Sigmoid colon (tissue), 7 donors: ENCODE measurements at regions of chr12 and their contacts with region 1.

Region 1: DNA sequence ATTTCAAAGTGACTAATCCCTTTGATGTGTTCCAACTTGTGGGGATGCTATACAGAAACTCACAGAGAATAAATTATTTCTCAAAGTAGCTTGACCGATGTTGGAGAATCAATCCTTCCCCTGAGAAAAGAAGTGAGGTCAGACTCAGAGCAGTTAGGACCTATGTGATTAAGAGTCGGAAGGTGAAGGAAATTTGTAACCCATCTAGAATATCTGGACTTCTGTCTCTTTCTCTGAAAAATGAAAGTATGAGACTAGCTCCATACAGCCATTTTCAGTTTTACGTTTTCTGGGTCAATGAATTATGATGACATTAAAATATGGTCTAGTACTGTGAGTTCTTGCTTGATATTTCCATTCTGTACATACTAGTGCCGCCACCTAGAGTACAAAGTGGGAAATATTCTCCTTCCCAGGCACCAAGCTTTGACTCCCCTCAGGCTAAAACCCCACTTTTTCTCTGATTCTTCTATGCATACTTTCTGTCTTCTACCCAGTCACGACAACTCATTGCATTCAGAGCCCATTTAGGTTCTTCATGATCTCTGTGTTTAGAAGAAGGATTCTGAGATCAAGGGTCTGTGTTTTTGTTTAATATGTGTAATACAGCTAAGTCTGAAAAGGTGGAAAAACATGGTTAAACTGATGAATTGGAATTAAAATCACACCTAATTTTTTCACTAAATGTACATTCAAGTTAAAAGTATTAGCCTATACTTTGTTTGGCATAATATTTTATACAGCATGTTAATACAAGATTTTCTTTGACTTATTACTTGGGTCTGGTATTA is 6.9 kb upstream of the NTS start:
- DNase-seq: no peak
- H3K4me3 ChIP-seq: peak overlapping the region in 2 of 4 donors; percentile 8 to 18
- H3K27ac ChIP-seq: no peak overlapping the region
- H3K4me1 ChIP-seq: no peaks in the 10 kb centered on the region
- H3K27me3 ChIP-seq: no peaks in the 10 kb centered on the region
- CTCF ChIP-seq: peak; percentile 7 to 80 (median 73)
- EP300 ChIP-seq: no peak
- POLR2A ChIP-seq: no peak

Region 2: DNA sequence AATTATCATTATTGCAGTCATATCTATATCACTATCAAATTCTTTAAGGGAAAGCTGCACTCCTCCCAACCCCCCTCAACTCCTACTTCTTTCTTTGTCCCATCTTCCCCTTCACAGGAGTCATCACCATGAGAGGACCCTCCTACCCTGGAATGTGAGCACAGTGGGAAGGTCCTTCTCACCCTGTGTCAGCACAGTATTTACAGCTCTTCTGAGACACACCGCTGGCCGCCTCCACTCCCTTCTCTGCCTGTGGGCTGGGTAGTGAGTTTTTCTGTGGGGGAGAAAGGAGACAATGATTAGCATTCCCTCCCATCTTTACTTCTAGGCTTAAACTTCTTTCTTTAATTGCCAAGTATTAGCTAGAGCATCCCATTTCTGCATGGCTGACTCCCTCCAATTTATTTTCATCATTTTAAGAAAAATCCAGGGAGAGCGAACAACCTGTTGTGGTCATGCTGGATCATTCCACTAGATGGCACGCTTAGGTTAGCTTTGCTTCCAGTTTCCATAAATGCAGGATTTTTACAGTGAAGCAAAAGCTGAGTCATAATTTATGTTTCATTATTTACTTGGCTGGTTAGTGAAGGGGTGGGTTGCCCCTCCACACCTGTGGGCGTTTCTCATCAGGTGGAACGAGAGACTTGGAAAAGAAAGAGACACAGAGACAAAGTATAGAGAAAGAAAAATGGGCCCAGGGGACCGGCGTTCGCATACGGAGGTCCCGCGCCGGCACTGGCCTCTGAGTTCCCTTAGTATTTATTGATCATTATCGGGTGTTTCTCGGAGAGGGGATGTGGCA is 398.6 kb before region 1 on chr12:
- intact Hi-C with region 1: loop called (anchors 2 kb)
- DNase-seq: no peak
- H3K4me3 ChIP-seq: peak overlapping the region; percentile 28 to 50 (median 42)
- H3K27ac ChIP-seq: no peak overlapping the region
- H3K4me1 ChIP-seq: no peaks in the 10 kb centered on the region
- H3K27me3 ChIP-seq: no peaks in the 10 kb centered on the region
- CTCF ChIP-seq: peak; percentile 42 to 69 (median 52)
- EP300 ChIP-seq: no peak
- POLR2A ChIP-seq: no peak

Region 3: DNA sequence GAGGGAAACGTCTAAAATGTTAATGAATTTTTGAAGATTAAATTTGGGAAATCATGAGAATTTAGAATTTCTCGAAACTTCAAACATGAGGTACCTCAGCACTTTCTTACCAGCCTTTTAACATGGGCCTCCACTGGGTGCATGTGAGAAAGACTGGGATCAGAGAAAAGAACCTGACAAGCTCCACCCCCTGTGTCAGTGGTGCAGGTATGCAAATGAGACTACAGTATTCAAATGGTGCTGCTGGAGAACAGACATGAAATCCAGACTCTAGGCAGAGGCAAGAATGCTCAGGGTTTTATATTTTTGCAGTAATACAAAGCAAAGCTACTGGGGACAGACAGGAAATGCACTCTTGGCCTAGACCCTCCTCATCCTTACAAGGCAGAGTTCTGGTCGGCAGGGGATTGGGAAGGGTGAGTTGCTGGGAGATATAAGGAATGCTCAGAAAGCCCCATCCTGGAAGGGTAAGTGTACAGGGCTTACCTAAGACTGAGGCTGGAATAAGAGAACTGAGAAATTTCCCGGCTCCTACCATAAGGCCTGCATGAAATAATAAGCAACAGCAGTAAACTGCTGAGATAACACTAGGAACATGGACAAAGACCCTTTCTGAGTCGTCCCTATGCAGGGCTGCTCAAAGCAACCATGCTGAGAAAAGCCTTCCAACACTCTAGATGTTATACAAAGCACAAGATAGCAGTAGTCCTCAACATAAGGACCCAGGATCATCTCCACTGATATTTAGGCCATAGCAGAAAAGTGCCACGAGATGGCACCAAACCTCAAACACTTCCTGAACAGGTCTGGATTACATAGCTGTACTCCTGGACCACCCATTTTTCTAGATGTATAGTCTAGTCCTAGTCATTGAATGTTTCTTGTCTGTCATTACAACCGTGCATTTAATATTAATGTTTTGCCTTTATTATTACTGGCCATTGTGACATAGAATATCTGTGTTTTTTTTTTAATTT is 291.8 kb before region 1 on chr12:
- intact Hi-C with region 1: loop called (anchors 5 kb)
- DNase-seq: no peak
- H3K4me3 ChIP-seq: no peak overlapping the region
- H3K27ac ChIP-seq: no peak overlapping the region
- H3K4me1 ChIP-seq: no peaks in the 10 kb centered on the region
- H3K27me3 ChIP-seq: no peaks in the 10 kb centered on the region
- CTCF ChIP-seq: peak in 3 of 4 experiments; percentile 35 to 55 (median 43)
- EP300 ChIP-seq: no peak
- POLR2A ChIP-seq: no peak

Region 4: GRCh38 chr12:86081843-86082242 is 214.7 kb after region 1 on chr12:
- intact Hi-C with region 1: no loop called
- DNase-seq: no peak
- H3K4me3 ChIP-seq: no peak overlapping the region
- H3K27ac ChIP-seq: peak overlapping the region in 1 of 4 donors; percentile 8
- H3K4me1 ChIP-seq: no peaks in the 10 kb centered on the region
- H3K27me3 ChIP-seq: no peaks in the 10 kb centered on the region
- CTCF ChIP-seq: no peak
- EP300 ChIP-seq: no peak
- POLR2A ChIP-seq: no peak